GM13977 (cell line): ENCODE measurements at regions of chr17 and their contacts with region 1.

Region 1: GRCh38 chr17:44864866-44865660 is 17.4 kb downstream of the HIGD1B start:
- DNase-seq: peak; percentile 77
- CTCF ChIP-seq: peak; percentile 83

Region 2: GRCh38 chr17:44044067-44044466 is 821.0 kb before region 1 on chr17:
- in situ Hi-C with region 1: no loop called
- DNase-seq: no peak
- CTCF ChIP-seq: no peak

Region 3: GRCh38 chr17:44533533-44534246 is 331.4 kb before region 1 on chr17:
- in situ Hi-C with region 1: loop called (anchors 25 kb)
- DNase-seq: peak; percentile 92
- CTCF ChIP-seq: peak; percentile 99

Region 4: GRCh38 chr17:44749076-44749979 is 115.7 kb before region 1 on chr17:
- in situ Hi-C with region 1: no loop called
- DNase-seq: no peak
- CTCF ChIP-seq: no peak

Region 5: DNA sequence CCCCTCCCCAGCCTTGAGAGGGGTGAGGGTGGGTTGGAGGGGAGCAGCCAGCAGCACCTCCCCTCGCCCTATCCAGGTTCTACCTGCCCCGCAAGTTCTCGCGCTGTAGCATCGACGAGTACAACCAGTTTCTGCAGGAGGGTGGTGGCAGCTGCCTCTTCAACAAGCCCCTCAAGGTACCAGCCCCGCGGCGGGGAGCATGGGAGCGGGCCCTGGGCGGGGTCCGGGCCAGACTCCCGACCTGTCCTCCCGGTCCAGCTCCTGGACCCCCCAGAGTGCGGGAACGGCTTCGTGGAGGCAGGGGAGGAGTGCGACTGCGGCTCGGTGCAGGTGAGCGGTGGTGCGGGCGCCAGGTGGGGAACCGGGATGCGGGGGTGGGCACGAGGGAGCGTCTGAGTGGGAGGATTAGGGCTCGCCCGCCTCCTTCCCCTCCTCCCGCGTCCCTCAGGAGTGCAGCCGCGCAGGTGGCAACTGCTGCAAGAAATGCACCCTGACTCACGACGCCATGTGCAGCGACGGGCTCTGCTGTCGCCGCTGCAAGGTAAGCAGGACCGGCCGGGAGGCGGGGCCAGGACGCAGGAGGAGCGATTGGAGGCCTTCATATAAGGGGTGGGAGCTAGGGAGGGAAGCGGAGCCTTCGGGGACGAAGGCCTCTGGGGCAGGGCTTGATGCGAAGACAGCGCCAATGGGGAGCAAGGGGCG is 89.8 kb before region 1 on chr17:
- in situ Hi-C with region 1: loop called (anchors 10 kb)
- DNase-seq: peak; percentile 99
- CTCF ChIP-seq: no peak